Activated T-helper 2 cell treated with anti-CD3 and anti-CD28 coated beads, Interferon-gamma antibody, Interleukin-2, Interleukin-4, amounts not matched to agents 10 μg/mL and 5 μg/mL and 100 μg/mL, durations not matched to agents 14 hours and 24 hours and 36 hours (primary cell): ENCODE measurements at regions of chr2 and their contacts with region 1.

Region 1: DNA sequence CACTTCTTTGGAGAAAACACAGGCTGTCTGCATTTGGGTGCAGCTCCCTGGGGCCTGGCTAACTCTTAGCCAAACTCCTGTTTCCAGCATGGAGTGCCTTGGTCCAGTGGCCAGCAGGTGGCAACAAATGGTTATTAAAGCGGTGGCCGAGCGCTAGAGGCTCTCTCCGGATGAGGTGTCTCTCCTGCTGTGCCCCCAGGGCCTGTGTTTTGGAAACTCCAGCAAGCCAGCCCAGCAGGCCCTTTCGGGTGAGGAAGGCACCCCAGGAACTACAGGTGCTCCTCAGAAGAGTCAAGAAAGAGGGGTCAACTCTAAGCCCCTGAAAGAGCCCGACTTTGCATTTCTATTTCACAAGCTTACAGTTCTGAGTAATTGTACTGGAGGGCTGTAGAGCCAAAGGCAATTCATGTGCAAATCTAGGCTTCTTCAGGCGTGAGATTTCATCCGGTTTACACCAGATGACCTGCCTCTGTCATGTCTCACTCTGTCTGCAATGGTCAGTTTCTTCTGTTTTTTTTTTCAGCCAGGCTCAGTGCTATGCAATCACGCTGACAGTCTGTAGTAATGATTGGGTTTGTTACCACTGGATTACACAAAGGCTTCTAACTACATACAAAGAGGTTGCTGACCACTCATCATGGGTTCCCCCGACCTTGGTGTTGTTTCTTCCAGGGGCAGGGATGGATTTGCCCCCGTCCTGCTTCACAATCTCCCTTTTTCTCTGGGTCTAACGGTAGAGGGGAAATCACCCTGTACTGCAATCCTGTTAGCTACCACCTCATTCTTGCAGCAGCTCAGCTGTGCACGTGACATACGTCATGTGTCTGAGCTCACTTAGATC is 7.6 kb upstream of the CHRNA1 start:
- DNase-seq: no peak
- H3K4me3 Mint-ChIP-seq: no peak overlapping the region
- H3K27ac Mint-ChIP-seq: no peak overlapping the region
- H3K4me1 Mint-ChIP-seq: peaks cover 14% of the 10 kb centered on the region
- H3K27me3 Mint-ChIP-seq: peaks cover 2% of the 10 kb centered on the region

Region 2: DNA sequence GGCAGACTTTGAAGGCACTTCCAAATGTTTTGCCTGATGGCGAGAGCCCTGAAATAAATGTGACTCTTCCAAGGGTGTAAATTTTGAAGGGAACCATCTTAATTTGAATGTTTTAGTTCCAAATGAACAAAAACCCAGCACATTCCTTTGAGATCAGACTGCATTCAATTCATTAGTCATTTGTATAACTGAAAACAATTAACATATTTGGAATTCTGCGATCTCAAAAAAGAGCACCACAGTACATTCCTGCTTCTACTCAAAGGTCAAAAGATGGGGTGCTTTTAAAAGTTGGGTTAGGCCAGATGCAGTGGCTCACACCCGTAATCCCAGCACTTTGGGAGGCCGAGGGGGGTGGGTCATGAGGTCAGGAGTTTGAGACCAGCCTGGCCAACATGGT is 30.6 kb after region 1 on chr2:
- intact Hi-C with region 1: no loop called
- DNase-seq: no peak
- H3K4me3 Mint-ChIP-seq: no peak overlapping the region
- H3K27ac Mint-ChIP-seq: no peak overlapping the region
- H3K4me1 Mint-ChIP-seq: peaks cover 17% of the 10 kb centered on the region
- H3K27me3 Mint-ChIP-seq: peaks cover 9% of the 10 kb centered on the region

Region 3: DNA sequence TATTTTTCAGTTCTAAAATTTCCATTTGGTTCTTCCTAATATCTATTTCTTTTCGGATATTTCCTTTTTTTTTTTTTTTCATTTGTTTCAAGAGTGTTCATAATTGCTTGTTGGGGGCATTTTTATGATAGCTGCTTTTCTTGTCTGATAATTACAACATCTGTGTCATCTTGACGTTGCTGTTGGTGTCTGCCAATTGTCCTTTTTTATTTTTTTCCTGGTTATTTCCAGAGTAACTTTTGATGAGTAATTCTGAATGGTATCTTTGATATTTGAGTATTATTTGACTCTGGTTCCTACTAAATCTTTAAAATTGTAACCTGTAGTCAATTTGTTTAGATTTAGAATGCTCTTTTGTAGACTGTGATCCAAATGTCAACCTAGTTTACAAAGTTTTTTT is 43.7 kb after region 1 on chr2:
- intact Hi-C with region 1: no loop called
- DNase-seq: no peak
- H3K4me3 Mint-ChIP-seq: no peak overlapping the region
- H3K27ac Mint-ChIP-seq: no peak overlapping the region
- H3K4me1 Mint-ChIP-seq: no peaks in the 10 kb centered on the region
- H3K27me3 Mint-ChIP-seq: no peaks in the 10 kb centered on the region

Region 4: DNA sequence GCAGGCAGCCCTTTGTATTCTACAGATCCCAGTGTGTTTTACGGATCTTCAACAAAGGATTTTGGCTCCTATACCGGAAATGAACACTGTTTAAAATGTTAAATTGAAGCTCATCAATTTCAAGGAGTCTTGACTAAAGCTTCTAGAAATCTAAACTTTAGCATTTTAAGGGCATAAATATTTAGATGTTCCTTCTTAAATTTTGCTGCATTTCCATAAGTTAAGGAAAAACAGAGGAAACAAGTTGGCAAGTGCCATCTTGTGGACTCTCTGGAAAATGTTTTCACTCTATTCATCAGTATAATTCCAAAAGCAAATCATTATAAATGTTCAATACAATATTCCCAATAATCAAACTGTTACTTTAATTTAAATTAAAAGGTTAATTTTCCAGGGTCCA is 213.8 kb after region 1 on chr2:
- intact Hi-C with region 1: loop called (anchors 5 kb)
- DNase-seq: no peak
- H3K4me3 Mint-ChIP-seq: no peak overlapping the region
- H3K27ac Mint-ChIP-seq: no peak overlapping the region
- H3K4me1 Mint-ChIP-seq: peaks cover 2% of the 10 kb centered on the region
- H3K27me3 Mint-ChIP-seq: peaks cover 17% of the 10 kb centered on the region

Region 5: GRCh38 chr2:175414882-175415487 is 643.1 kb after region 1 on chr2:
- intact Hi-C with region 1: no loop called
- DNase-seq: no peak
- H3K4me3 Mint-ChIP-seq: no peak overlapping the region
- H3K27ac Mint-ChIP-seq: no peak overlapping the region
- H3K4me1 Mint-ChIP-seq: no peaks in the 10 kb centered on the region
- H3K27me3 Mint-ChIP-seq: peaks cover 4% of the 10 kb centered on the region